AG04450 (cell line): ENCODE measurements at regions of chr6 and their contacts with region 1.

Region 1: GRCh38 chr6:116010790-116011401 is 49.8 kb downstream of the FRK start:
- DNase-seq: peak; percentile 39
- H3K4me3 ChIP-seq: no peak overlapping the region
- H3K27ac ChIP-seq: no peak overlapping the region
- H3K27me3 ChIP-seq: no peaks in the 10 kb centered on the region
- CTCF ChIP-seq: peak; percentile 89

Region 2: DNA sequence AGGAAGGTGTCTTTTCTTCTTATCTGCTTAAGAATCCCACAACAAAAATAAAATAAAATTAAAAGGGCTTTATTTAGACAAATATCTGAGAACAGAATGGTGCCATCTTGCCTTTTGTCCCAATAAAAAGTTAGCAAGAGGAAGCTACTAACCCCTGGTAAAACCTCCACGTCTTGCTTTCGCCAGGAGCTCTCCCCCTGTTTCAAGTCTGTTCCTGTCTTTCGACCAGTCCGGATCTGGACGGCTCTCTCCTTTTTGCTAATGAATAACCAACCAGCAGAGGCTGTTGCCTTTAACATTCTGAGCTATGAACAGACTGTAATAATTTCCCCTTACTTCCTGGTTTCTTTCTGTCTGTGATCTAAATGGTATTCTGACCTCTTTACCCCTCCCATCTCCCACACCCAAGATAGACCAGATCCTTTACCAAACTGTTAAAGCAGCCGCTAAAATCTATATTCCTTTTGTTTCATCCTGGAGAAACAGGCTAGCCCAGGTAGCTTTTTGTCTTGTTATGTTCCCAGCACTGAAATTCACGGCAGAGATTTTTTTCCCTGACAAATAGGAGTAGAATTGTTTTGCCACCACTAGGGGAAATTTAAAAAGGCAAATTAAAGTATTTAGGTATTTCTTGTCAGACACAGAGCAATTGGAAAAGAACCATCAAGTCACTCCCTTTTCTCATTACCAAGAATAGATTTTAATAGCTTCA is 49.8 kb after region 1 on chr6 and contains the start of gene FRK:
- CTCF ChIA-PET with region 1: interaction called, 29 read pairs
- POLR2A ChIA-PET with region 1: no interaction called
- DNase-seq: no peak
- H3K4me3 ChIP-seq: peak within 1 kb of the TSS; percentile 49
- H3K27ac ChIP-seq: peak within 1 kb of the TSS; percentile 47
- H3K27me3 ChIP-seq: no peaks in the 10 kb centered on the region
- CTCF ChIP-seq: peak; percentile 52
- polyA plus RNA-seq, gene FRK: 0.31 and 0.43 TPM in 2 replicates

Region 3: DNA sequence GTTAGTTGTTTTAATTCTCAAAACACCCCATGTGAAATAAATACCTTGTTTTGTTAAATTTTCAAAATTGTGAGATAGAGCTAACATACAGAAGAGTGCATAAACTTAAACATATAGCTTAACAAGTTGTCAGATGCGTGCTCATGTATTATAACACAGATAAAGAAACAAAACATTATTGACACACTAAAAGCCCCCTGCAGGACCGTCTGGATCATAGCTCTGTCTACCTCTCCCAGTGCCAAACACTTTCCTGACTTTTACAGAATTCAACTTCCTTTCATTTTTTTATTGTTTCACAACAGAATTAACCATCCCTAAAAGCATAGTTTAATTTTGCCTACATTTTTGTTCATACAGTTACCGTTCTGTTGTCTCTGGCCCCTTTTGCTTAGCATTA is 67.6 kb after region 1 on chr6:
- CTCF ChIA-PET with region 1: interaction called, 11 read pairs
- POLR2A ChIA-PET with region 1: interaction called, 9 read pairs
- DNase-seq: no peak
- H3K4me3 ChIP-seq: no peak overlapping the region
- H3K27ac ChIP-seq: no peak overlapping the region
- H3K27me3 ChIP-seq: no peaks in the 10 kb centered on the region
- CTCF ChIP-seq: 0 out of 2 replicates have a peak, but pooled peaks have one; percentile 2

Region 4: DNA sequence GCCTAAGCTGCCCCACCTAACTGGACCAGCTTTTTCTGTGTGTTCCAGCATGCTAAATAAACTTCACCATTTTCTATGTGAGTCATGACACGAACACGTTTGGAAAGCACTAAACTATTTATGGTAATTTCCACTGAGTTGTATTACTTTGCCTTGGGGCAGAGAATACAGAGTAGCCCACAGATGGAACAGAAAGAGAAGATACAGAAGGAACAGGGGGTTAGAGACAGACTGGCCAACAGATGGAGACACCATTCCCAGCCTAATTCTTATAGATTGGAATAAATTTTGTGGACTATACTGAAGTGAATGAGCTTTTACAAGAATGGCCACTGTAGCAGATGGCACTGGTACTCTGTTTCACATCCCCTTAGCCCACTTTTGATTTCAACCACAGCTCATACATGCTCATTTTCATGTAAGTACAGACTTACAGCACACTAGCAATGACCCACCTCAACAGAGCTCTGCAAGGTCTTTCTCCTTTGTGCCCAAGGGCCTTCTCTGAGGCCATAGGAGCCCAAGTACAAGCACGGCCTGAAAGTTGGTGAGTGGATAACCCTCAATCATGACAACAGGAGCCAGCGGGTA is 76.6 kb after region 1 on chr6:
- CTCF ChIA-PET with region 1: interaction called, 43 read pairs
- POLR2A ChIA-PET with region 1: interaction called, 3 read pairs
- DNase-seq: no peak
- H3K4me3 ChIP-seq: no peak overlapping the region
- H3K27ac ChIP-seq: peak overlapping the region; percentile 60
- H3K27me3 ChIP-seq: no peaks in the 10 kb centered on the region
- CTCF ChIP-seq: peak; percentile 25

Region 5: DNA sequence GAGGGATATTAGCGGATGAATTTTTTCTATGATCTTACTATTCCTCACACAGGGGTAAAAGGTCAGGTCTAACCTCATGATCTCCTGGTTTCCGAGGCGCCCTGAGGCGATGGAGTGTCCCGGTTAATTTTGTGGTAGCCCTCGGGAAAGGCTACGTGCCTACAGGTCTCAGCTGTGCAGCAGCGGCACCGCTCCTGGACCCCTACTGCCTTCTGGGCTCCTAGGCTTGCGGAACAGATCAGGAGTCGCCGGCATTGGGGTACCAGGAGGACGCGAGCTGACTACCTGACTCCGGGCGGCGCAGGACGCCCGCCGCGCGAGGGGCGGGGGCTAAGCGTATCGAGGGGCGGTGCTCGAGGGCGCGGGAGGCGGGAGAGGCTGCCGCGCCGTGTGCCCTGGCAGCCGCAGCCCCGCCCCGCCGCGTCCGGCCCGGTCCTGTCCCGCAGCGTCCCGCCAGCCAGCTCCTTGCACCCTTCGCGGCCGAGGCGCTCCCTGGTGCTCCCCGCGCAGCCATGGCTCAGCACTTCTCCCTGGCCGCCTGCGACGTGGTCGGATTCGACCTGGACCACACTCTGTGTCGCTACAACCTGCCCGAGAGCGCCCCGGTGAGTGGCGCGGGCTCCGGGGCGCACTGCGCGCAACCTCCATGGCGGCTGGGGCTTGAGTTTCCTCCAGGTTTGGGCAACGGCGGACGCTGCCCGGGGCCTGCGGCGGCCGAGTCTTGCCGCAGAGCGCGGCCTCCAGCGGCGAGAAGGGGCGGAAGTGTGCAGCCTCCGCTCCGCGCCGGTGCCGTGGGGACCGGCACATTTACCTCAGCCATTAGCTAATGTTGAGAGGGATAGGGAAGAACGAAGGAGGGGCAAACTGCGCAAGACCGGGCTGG is 89.8 kb after region 1 on chr6 and contains the start of gene NT5DC1:
- CTCF ChIA-PET with region 1: interaction called, 160 read pairs
- POLR2A ChIA-PET with region 1: interaction called, 8 read pairs
- DNase-seq: no peak
- H3K4me3 ChIP-seq: peak within 1 kb of the TSS; percentile 89
- H3K27ac ChIP-seq: peak within 1 kb of the TSS; percentile 65
- H3K27me3 ChIP-seq: no peaks in the 10 kb centered on the region
- CTCF ChIP-seq: peak; percentile 31
- polyA plus RNA-seq, gene NT5DC1: 20.9 and 23.2 TPM in 2 replicates

Region 6: GRCh38 chr6:116106146-116106545 is 95.2 kb after region 1 on chr6:
- CTCF ChIA-PET with region 1: interaction called, 42 read pairs
- POLR2A ChIA-PET with region 1: interaction called, 8 read pairs
- DNase-seq: no peak
- H3K4me3 ChIP-seq: no peak overlapping the region
- H3K27ac ChIP-seq: no peak overlapping the region
- H3K27me3 ChIP-seq: no peaks in the 10 kb centered on the region
- CTCF ChIP-seq: no peak

Region 7: DNA sequence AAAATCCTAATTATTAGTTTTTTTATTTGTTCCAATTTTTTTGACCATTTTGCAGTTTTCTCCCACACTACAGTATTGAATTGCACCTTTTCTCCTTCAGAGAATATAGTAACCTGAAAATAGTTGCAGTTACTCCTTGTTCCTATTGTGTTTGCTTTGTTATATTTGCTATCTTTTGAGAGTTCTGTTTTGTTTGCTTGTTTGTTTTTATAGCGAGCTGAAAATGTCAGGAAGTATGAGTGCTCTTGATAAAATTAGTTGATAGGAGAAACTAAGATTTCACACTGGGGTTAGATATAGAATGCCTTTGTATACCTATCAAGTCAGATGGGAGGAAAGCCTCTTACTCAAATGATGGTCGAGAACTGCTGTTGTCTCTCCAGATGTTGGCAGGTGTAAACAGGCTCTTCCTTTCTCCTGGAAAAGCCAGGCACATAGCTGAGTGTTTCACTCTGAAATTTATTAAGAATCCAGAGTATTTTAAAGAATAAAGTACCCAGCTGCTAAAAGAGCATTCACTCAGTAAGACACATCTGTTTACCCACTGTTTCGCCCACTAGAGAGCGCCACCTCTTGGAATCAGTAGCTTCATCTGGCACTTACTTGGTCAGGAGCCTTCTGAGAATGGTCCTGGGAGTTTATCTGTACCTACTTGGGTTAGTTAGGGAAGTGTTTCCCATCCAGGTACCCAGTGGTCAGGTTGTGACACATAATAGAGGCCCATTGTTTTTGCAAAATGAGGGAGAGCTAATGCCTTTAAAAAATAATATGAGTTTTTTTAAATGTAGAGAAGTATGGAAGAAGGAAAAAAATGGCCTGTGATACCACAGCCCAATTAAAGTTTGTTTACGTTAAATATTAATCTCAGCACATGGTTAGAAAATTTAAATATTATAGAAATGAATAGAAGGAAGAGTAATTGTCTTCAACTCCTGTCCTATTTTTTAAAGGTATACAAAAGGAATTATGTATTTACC is 100.9 kb after region 1 on chr6:
- CTCF ChIA-PET with region 1: interaction called, 42 read pairs
- POLR2A ChIA-PET with region 1: no interaction called
- DNase-seq: no peak
- H3K4me3 ChIP-seq: no peak overlapping the region
- H3K27ac ChIP-seq: no peak overlapping the region
- H3K27me3 ChIP-seq: no peaks in the 10 kb centered on the region
- CTCF ChIP-seq: peak; percentile 70

Region 8: GRCh38 chr6:116136933-116137340 is 126.0 kb after region 1 on chr6:
- CTCF ChIA-PET with region 1: no interaction called
- POLR2A ChIA-PET with region 1: no interaction called
- DNase-seq: no peak
- H3K4me3 ChIP-seq: no peak overlapping the region
- H3K27ac ChIP-seq: no peak overlapping the region
- H3K27me3 ChIP-seq: no peaks in the 10 kb centered on the region
- CTCF ChIP-seq: no peak